A549 (cell line): ENCODE measurements at regions of chr7 and their contacts with region 1.

Region 1: GRCh38 chr7:74401137-74401859 is 52.4 kb upstream of the GTF2IRD1 start:
- DNase-seq: peak; percentile 66 to 72
- ATAC-seq: peak; percentile 74 to 87
- H3K4me3 ChIP-seq: no peak overlapping the region
- H3K27ac ChIP-seq: no peak overlapping the region
- H3K4me1 ChIP-seq: no peaks in the 10 kb centered on the region
- CTCF ChIP-seq: peak; percentile 92
- EP300 ChIP-seq: no peak
- POLR2A ChIP-seq: no peak
- RAD21 ChIP-seq: peak; percentile 94 to 96

Region 2: GRCh38 chr7:73865738-73866445 is 535.4 kb before region 1 on chr7:
- CTCF ChIA-PET with region 1: interaction called, 18 read pairs
- POLR2A ChIA-PET with region 1: no interaction called
- DNase-seq: peak; percentile 58 to 63
- ATAC-seq: peak; percentile 76 to 86; a peak in 4 of 6 replicates
- H3K4me3 ChIP-seq: no peak overlapping the region
- H3K27ac ChIP-seq: no peak overlapping the region
- H3K4me1 ChIP-seq: peaks cover 10% of the 10 kb centered on the region; the same call in 2 of the 3 replicates
- CTCF ChIP-seq: peak; percentile 81
- EP300 ChIP-seq: no peak
- POLR2A ChIP-seq: no peak
- RAD21 ChIP-seq: peak; percentile 88 to 91

Region 3: DNA sequence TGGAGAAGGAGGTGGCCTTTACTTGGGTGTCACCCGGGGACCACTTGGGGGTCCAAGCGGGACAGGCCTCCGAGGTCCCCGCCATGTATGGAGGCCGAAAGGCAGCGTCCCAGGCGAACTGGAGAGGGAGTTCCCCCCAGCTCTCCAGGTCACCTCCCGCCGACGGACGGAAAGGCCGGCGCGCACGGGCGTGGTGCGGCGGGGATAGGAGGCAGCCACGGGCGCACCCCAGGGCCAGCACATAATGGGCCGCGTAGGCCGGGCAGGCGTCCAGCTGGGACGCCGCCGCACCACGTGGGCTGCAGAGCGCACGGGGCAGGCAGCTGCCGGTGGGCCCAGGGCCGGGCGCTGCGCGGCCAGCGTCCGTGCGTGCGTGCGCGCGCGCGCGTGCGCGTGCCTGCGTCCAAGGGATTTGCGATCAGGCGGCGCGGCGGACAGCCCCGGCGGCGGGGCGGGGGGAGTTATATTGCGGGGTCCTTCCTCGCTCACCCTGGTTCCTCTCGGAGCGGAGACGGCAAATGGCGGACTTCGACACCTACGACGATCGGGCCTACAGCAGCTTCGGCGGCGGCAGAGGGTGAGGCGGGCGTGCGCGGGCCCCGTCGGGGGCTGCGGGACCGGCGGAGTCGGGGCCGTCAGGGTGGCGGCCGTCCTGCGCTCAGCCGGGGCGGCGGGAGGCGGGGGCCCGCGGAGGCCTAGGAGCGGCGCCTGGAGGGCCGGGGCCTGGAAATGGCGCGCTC is 227.3 kb before region 1 on chr7 and contains the start of gene EIF4H:
- CTCF ChIA-PET with region 1: interaction called, 19 read pairs
- POLR2A ChIA-PET with region 1: no interaction called
- DNase-seq: peak; percentile 88 to 96
- ATAC-seq: peak; percentile 96 to 97
- H3K4me3 ChIP-seq: peak within 1 kb of the TSS; percentile 96
- H3K27ac ChIP-seq: peak within 1 kb of the TSS; percentile 94 to 99
- H3K4me1 ChIP-seq: peaks cover 38% of the 10 kb centered on the region
- CTCF ChIP-seq: no peak
- EP300 ChIP-seq: no peak
- POLR2A ChIP-seq: peak; percentile 78
- RAD21 ChIP-seq: no peak
- polyA plus RNA-seq, gene EIF4H: 300 and 364 TPM in 2 replicates

Region 4: GRCh38 chr7:74240482-74240881 is 160.8 kb before region 1 on chr7:
- CTCF ChIA-PET with region 1: interaction called, 14 read pairs
- POLR2A ChIA-PET with region 1: no interaction called
- DNase-seq: no peak
- ATAC-seq: no peak
- H3K4me3 ChIP-seq: no peak overlapping the region
- H3K27ac ChIP-seq: no peak overlapping the region
- H3K4me1 ChIP-seq: no peaks in the 10 kb centered on the region
- CTCF ChIP-seq: no peak
- EP300 ChIP-seq: no peak
- POLR2A ChIP-seq: no peak
- RAD21 ChIP-seq: no peak

Region 5: GRCh38 chr7:74281030-74281429 is 120.3 kb before region 1 on chr7:
- CTCF ChIA-PET with region 1: interaction called, 21 read pairs
- POLR2A ChIA-PET with region 1: no interaction called
- DNase-seq: peak in 1 of 2 experiments; percentile 62
- ATAC-seq: peak in 1 of 2 experiments; percentile 7; a peak in 2 of 6 replicates
- H3K4me3 ChIP-seq: no peak overlapping the region
- H3K27ac ChIP-seq: peak overlapping the region; percentile 79 to 90
- H3K4me1 ChIP-seq: peaks cover 51% of the 10 kb centered on the region
- CTCF ChIP-seq: no peak
- EP300 ChIP-seq: no peak
- POLR2A ChIP-seq: no peak
- RAD21 ChIP-seq: no peak

Region 6: DNA sequence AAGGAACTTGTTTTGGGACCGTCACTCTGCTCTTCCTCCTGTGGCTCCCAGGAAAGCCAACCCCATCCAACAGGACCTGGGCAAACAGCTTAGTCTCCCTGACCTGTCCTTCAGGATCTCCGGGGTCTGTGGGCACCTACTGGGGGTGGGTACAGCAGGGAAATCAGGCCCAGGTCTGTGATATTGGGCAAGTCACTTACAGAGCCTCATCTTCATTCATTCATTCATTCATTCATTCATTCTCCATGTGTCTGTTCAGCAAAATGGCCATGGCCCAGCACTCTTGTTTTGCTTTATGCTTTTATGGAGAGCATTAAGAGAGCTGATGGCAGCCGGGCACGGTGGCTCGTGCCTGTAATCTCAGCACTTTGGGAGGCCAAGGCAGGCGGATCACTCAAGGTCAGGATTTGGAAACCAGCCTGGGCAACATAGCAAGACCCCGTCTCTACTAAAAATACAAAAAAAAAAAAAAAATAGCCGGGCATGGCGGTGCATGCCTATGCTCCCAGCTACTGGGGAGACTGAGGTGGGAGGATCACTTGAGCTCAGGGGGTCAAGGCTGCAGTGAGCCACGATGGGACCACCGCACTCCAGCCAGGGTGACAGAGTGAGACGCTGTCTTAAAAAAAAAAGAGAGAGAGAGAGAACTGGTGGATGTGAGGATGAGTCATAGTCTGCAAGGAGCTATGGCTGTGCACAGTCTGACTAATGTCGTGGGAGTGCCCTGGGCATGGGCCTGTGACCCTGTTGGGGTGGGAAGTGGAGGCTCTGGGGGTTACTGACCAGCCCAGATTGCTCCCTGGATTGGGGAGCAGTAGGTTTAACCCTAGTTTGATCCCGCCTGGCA is 57.8 kb before region 1 on chr7:
- CTCF ChIA-PET with region 1: interaction called, 10 read pairs
- POLR2A ChIA-PET with region 1: no interaction called
- DNase-seq: peak; percentile 71 to 91
- ATAC-seq: peak; percentile 92 to 99
- H3K4me3 ChIP-seq: no peak overlapping the region
- H3K27ac ChIP-seq: peak overlapping the region; percentile 83 to 89
- H3K4me1 ChIP-seq: peaks cover 20% of the 10 kb centered on the region
- CTCF ChIP-seq: no peak
- EP300 ChIP-seq: no peak
- POLR2A ChIP-seq: no peak
- RAD21 ChIP-seq: no peak

Region 7: GRCh38 chr7:74412056-74412455 is 10.8 kb after region 1 on chr7:
- CTCF ChIA-PET with region 1: interaction called, 60 read pairs
- POLR2A ChIA-PET with region 1: no interaction called
- DNase-seq: no peak
- ATAC-seq: peak; percentile 50 to 52; a peak in 4 of 6 replicates
- H3K4me3 ChIP-seq: no peak overlapping the region
- H3K27ac ChIP-seq: no peak overlapping the region
- H3K4me1 ChIP-seq: no peaks in the 10 kb centered on the region
- CTCF ChIP-seq: no peak
- EP300 ChIP-seq: no peak
- POLR2A ChIP-seq: no peak
- RAD21 ChIP-seq: no peak